Breast epithelium (tissue), 4 donors: ENCODE measurements at regions of chr9 and their contacts with region 1.

Region 1: DNA sequence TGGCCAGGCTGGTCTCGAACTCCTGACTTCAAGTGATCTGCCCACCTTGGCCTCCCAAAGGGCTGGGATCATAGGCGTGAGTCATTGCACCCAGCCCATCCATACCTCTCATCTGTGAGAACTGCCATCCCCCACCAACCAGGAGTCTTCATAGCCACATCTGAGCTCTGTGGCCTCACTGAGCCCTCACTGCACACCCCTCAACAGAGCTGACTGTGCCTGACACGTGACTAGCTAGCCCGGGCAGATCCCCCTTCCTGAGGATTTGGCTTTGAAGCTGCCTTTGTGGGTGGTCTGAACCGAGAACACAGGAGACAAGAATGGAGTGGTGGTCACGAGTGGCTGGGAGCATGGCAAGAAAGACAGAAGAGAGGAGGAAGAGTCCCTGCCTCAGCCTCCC is 15.6 kb downstream of the AK8 start:
- DNase-seq: no peak
- H3K4me3 ChIP-seq: no peak overlapping the region
- H3K27ac ChIP-seq: no peak overlapping the region
- H3K4me1 ChIP-seq: no peaks in the 10 kb centered on the region
- H3K27me3 ChIP-seq: no peaks in the 10 kb centered on the region
- CTCF ChIP-seq: no peak
- POLR2A ChIP-seq: no peak

Region 2: DNA sequence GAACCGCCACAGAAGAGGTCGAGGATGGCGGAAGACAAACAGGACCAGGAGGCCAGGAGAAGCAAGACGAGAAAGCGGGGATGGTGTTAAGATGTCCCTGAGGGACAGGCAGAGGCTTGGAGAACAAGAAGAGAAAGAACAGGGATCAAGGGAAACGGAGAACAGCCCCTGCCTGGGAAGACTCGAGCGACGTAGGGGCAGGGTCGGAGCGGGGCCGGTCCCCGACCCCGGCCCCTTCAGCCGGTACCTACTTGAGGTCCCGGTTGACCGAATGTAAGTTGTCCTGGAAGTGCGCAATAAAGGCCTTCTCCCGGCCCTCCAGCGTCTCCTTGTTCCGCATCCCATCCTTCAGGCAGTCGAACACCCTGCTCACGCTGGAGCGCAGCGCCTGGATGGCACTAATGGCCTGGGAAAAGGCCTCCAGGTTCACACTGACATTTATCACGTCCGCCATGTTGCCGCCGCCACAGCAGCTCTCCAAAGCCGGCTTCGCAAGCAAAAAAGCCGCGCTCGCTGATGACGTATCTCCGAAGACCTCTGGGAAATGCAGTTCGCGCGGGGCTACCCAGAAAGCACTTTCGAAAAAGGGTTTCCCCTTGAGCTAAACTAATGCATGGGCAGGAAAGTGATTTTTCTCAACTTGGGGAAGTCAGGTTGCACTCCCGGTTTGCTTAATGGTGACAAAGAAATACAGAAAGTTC is 783.0 kb before region 1 on chr9 and contains the start of gene MED27:
- intact Hi-C with region 1: loop called (anchors 10 kb)
- DNase-seq: peak; percentile 83 to 88
- H3K4me3 ChIP-seq: peak within 1 kb of the TSS; percentile 72 to 84 (median 77)
- H3K27ac ChIP-seq: peak within 1 kb of the TSS; percentile 78 to 82
- H3K4me1 ChIP-seq: no peaks in the 10 kb centered on the region
- H3K27me3 ChIP-seq: no peaks in the 10 kb centered on the region
- CTCF ChIP-seq: no peak
- POLR2A ChIP-seq: no peak
- total RNA-seq, gene MED27: 14.4 to 20.3 (median 15.8) TPM

Region 3: GRCh38 chr9:132833550-132834121 is 28.9 kb before region 1 on chr9:
- intact Hi-C with region 1: no loop called
- DNase-seq: no peak
- H3K4me3 ChIP-seq: no peak overlapping the region
- H3K27ac ChIP-seq: no peak overlapping the region
- H3K4me1 ChIP-seq: no peaks in the 10 kb centered on the region
- H3K27me3 ChIP-seq: no peaks in the 10 kb centered on the region
- CTCF ChIP-seq: no peak
- POLR2A ChIP-seq: no peak